ENCODE measurements at regions of chr2 and their contacts with region 1.

Region 1: GRCh38 chr2:9205963-9206948 is at the start of gene ASAP2:
- DNase-seq: peak; percentile 70
- ATAC-seq: peak; percentile 74
- H3K4me3 Mint-ChIP-seq: peak within 1 kb of the TSS; percentile 62
- H3K27ac Mint-ChIP-seq: no peak within 1 kb of the TSS
- H3K4me1 Mint-ChIP-seq: peaks cover 11% of the 10 kb centered on the region
- H3K27me3 Mint-ChIP-seq: peaks cover 43% of the 10 kb centered on the region
- total RNA-seq, gene ASAP2: 0.21 to 0.26 TPM

Region 2: GRCh38 chr2:8488001-8488738 is 718.1 kb before region 1 on chr2:
- CTCF ChIA-PET with region 1: no interaction called
- POLR2A ChIA-PET with region 1: no interaction called
- intact Hi-C with region 1: no loop called
- DNase-seq: peak; percentile 80
- ATAC-seq: peak; percentile 85
- H3K4me3 Mint-ChIP-seq: peak overlapping the region; percentile 72
- H3K27ac Mint-ChIP-seq: peak overlapping the region; percentile 86
- H3K4me1 Mint-ChIP-seq: peaks cover 49% of the 10 kb centered on the region
- H3K27me3 Mint-ChIP-seq: no peaks in the 10 kb centered on the region

Region 3: DNA sequence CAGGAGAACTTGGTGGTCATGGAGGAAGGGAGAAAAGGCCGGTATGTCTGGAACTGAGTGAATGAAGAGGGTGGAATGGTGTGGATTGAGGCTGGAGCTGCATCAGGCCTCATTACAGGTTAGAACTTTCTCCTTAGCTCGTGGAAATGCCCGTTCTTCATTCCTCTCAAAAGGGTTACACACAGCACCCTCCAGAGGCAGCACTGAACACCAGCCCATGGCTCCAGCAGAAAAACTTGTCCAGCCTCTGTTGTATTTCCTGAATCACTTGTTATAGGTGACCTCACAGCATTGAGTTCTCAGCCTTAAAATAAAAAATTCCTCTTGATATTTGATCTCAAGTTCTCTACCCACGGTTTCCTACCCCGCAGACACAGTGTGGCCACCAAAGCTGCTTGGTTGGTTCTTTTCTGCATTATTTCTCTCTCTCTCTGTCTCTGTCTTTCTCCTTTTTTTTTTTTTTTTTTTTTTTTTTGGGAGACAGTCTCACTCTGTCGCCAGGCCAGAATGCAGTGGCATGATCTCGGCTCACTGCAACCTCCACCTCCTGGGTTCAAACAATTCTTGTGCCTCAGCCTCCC is 127.4 kb after region 1 on chr2:
- CTCF ChIA-PET with region 1: interaction called, 3 read pairs
- POLR2A ChIA-PET with region 1: no interaction called
- intact Hi-C with region 1: loop called in 1 of 2 experiments (anchors 2 kb)
- DNase-seq: peak; percentile 53
- ATAC-seq: peak; percentile 36
- H3K4me3 Mint-ChIP-seq: no peak overlapping the region
- H3K27ac Mint-ChIP-seq: no peak overlapping the region
- H3K4me1 Mint-ChIP-seq: peaks cover 19% of the 10 kb centered on the region
- H3K27me3 Mint-ChIP-seq: peaks cover 1% of the 10 kb centered on the region

Region 4: GRCh38 chr2:9370746-9371145 is 164.5 kb after region 1 on chr2:
- CTCF ChIA-PET with region 1: no interaction called
- POLR2A ChIA-PET with region 1: no interaction called
- intact Hi-C with region 1: loop called in 1 of 2 experiments (anchors 1 kb)
- DNase-seq: no peak
- ATAC-seq: peak; percentile 50
- H3K4me3 Mint-ChIP-seq: no peak overlapping the region
- H3K27ac Mint-ChIP-seq: peak overlapping the region; percentile 30
- H3K4me1 Mint-ChIP-seq: peaks cover 13% of the 10 kb centered on the region
- H3K27me3 Mint-ChIP-seq: peaks cover 5% of the 10 kb centered on the region

Region 5: DNA sequence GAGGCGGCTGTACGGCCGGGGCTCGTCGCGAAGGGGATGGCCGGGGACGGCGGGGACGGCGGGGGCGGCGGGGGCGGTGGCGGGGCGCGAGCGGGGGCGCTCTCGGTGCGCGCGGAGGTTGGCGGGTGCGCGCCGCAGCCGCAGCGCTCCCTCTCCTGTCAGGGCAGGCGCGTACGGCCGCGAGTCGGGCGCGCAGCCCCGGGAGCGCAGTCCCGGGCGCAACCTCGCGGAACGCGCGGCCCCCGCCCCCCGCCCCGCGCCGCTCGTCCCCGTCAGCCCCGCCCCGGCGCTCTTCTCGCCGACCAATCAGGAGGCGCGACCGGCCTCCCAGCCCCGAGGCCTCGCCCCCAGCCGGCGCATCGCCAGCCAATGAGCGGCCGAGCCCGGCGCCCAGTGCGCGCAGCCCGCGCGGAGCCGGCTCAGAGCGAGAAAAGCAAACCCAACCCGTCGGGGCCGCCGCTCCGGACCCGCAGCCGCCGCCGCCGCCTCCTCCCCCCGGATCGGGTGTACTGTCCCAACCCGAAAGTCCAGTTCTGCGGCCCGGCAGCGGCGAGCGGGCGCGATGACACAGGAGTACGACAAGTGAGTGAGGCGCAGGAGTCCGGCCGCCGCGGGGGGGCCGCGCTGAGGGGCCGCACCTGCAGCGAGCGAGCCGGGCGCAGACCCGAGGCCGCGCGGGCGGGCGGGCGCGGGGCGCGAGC is 745.2 kb after region 1 on chr2 and contains the start of gene GRHL1:
- CTCF ChIA-PET with region 1: no interaction called
- POLR2A ChIA-PET with region 1: no interaction called
- intact Hi-C with region 1: loop called in 1 of 2 experiments (anchors 1 kb)
- DNase-seq: peak; percentile 95
- ATAC-seq: peak; percentile 98
- H3K4me3 Mint-ChIP-seq: peak within 1 kb of the TSS; percentile 68
- H3K27ac Mint-ChIP-seq: no peak within 1 kb of the TSS
- H3K4me1 Mint-ChIP-seq: peaks cover 4% of the 10 kb centered on the region
- H3K27me3 Mint-ChIP-seq: peaks cover 39% of the 10 kb centered on the region
- total RNA-seq, gene GRHL1: 0.27 to 0.53 TPM